ENCODE measurements at regions of chr2 and their contacts with region 1.

Region 1: DNA sequence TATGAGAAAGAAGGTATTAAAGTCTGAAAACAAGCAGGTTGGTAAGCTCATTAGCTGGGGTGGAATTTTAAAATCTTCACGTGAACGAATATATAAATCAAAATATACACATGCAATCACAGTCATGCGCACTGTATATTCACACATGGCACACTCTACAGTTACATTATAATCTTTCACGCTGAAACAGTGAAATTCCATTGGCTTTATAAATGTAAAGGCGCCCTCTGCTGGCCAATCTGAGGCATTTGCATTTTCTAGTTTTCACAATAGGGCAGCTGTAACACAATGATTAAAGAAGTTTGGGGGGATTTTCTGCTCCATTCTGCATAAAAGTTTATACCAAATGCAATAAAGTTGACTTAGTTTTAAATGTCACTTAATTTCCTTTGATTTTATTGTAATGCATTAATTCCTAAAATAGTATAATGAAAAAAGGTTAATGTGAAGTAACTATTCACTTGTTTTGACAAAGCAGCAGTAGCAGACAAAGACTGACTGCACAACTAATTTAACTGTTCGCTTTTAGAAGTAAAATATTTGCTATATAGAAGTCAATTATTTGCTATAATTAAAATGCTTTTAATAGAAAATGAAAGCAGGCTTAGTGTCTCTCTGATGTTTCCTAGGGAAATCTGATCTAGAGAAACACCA is 17.2 kb downstream of the IFIH1 start:
- DNase-seq: peak in 8 of 9 donors; percentile 26 to 57 (median 53)
- ATAC-seq: peak; percentile 91
- H3K4me3 ChIP-seq: no peak overlapping the region
- H3K4me3 Mint-ChIP-seq: no peak overlapping the region
- H3K27ac ChIP-seq: no peak overlapping the region
- H3K27ac Mint-ChIP-seq: peak overlapping the region in 1 of 9 donors; percentile 43
- H3K4me1 ChIP-seq: peaks cover 0 to 5% of the 10 kb centered on the region in 2 donors
- H3K4me1 Mint-ChIP-seq: peaks cover 0 to 7% (median 0%) of the 10 kb centered on the region in 7 donors
- H3K27me3 ChIP-seq: no peaks in the 10 kb centered on the region
- H3K27me3 Mint-ChIP-seq: no peaks in the 10 kb centered on the region

Region 2: DNA sequence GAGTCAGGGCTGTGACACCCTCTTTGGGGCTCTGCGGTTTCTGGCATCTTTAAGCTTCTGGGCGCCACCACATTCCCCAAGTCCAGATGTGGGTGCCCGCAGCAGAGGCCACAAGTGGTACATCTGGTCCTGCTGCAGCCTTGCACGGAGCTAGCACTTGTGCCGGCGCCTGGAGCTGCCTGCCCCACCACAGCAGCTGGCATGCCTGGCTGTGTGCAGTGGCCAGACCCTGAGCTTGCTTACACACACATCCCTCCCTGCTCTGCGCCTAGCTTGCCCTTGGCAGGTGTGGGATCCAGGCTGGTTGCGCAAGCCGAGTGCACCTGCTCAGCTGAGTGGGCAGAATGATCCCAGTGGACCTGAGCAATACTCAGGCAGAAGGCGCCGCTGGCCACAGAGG is 649.7 kb before region 1 on chr2:
- CTCF ChIA-PET with region 1: no interaction called
- POLR2A ChIA-PET with region 1: no interaction called
- intact Hi-C with region 1: no loop called
- DNase-seq: no peak
- ATAC-seq: no peak
- H3K4me3 ChIP-seq: no peak overlapping the region
- H3K4me3 Mint-ChIP-seq: no peak overlapping the region
- H3K27ac ChIP-seq: no peak overlapping the region
- H3K27ac Mint-ChIP-seq: no peak overlapping the region
- H3K4me1 ChIP-seq: no peaks in the 10 kb centered on the region
- H3K4me1 Mint-ChIP-seq: no peaks in the 10 kb centered on the region
- H3K27me3 ChIP-seq: no peaks in the 10 kb centered on the region
- H3K27me3 Mint-ChIP-seq: peaks cover 7 to 23% (median 9%) of the 10 kb centered on the region in 5 donors

Region 3: GRCh38 chr2:162153608-162154224 is 147.6 kb before region 1 on chr2:
- CTCF ChIA-PET with region 1: interaction called, 7 read pairs
- POLR2A ChIA-PET with region 1: no interaction called
- intact Hi-C with region 1: loop called (anchors 1 kb)
- DNase-seq: peak in 8 of 9 donors; percentile 11 to 57 (median 46)
- ATAC-seq: peak; percentile 90
- H3K4me3 ChIP-seq: no peak overlapping the region
- H3K4me3 Mint-ChIP-seq: peak overlapping the region in 8 of 10 donors; percentile 3 to 71 (median 41)
- H3K27ac ChIP-seq: no peak overlapping the region
- H3K27ac Mint-ChIP-seq: no peak overlapping the region
- H3K4me1 ChIP-seq: no peaks in the 10 kb centered on the region
- H3K4me1 Mint-ChIP-seq: peaks cover 0 to 7% (median 5%) of the 10 kb centered on the region in 7 donors
- H3K27me3 ChIP-seq: no peaks in the 10 kb centered on the region
- H3K27me3 Mint-ChIP-seq: peaks cover 24 to 60% (median 42%) of the 10 kb centered on the region in 5 donors

Region 4: DNA sequence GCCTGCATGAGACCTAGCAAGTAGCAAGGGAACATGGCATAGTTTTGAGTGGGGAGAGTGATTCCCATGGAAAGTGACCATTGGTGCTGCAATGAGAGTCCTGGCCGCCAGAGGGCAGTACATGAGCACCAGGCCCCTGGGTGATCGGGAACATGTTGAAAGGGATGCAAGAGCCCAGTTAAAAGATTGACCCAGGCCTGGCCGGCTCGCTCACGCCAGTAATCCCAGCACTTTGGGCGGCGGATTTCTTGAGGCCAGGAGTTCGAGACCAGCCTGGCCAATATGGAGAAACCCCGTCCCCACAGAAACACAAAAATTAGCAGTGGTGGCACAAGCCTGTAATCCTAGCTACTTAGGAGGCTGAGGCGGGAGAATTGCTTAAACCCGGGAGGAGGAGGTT is 80.2 kb before region 1 on chr2:
- CTCF ChIA-PET with region 1: interaction called, 9 read pairs
- POLR2A ChIA-PET with region 1: no interaction called
- intact Hi-C with region 1: loop called (anchors 1 kb)
- DNase-seq: peak in 8 of 9 donors; percentile 5 to 62 (median 28)
- ATAC-seq: peak; percentile 83
- H3K4me3 ChIP-seq: no peak overlapping the region
- H3K4me3 Mint-ChIP-seq: no peak overlapping the region
- H3K27ac ChIP-seq: no peak overlapping the region
- H3K27ac Mint-ChIP-seq: no peak overlapping the region
- H3K4me1 ChIP-seq: no peaks in the 10 kb centered on the region
- H3K4me1 Mint-ChIP-seq: peaks cover 0 to 5% (median 0%) of the 10 kb centered on the region in 7 donors
- H3K27me3 ChIP-seq: no peaks in the 10 kb centered on the region
- H3K27me3 Mint-ChIP-seq: peaks cover 32 to 48% (median 39%) of the 10 kb centered on the region in 5 donors

Region 5: GRCh38 chr2:162277381-162277780 is 23.9 kb before region 1 on chr2:
- CTCF ChIA-PET with region 1: interaction called, 16 read pairs
- POLR2A ChIA-PET with region 1: no interaction called
- intact Hi-C with region 1: no loop called
- DNase-seq: no peak
- ATAC-seq: no peak
- H3K4me3 ChIP-seq: no peak overlapping the region
- H3K4me3 Mint-ChIP-seq: no peak overlapping the region
- H3K27ac ChIP-seq: no peak overlapping the region
- H3K27ac Mint-ChIP-seq: no peak overlapping the region
- H3K4me1 ChIP-seq: no peaks in the 10 kb centered on the region
- H3K4me1 Mint-ChIP-seq: no peaks in the 10 kb centered on the region
- H3K27me3 ChIP-seq: no peaks in the 10 kb centered on the region
- H3K27me3 Mint-ChIP-seq: no peaks in the 10 kb centered on the region